PC-3 (cell line): ENCODE measurements at regions of chr5 and their contacts with region 1.

Region 1: GRCh38 chr5:51810592-51810991 is 427.3 kb downstream of the ISL1 start:
- DNase-seq: peak; percentile 88
- ATAC-seq: peak; percentile 93
- H3K4me3 ChIP-seq: no peak overlapping the region
- H3K27ac ChIP-seq: peak overlapping the region; percentile 94
- H3K4me1 ChIP-seq: peaks cover 42% of the 10 kb centered on the region
- H3K27me3 ChIP-seq: no peaks in the 10 kb centered on the region
- CTCF ChIP-seq: no peak

Region 2: DNA sequence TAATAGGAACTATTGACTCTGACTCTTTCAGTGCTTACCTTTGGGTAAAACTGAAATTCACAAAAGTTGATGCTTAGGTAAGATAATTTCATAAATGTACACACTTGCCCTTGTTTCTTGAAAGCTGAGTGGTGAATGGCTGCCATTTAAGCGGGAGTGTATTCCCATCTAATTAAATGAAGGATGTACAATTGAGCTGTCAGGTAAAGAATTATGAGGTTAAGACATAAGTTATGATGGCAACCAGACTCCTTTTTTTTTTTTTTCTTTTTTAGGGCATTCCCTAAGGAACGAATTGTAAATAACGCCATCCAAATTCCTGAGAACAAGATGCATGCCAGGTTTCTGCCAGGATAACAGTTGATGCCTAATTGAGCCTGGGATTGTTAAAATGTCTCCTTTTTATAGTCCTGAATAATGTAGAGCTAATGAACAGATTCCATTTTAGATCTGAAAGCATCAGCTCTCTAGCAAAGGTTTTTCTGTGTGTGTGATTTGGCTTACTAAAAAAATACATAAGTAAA is 227.7 kb before region 1 on chr5:
- CTCF ChIA-PET with region 1: no interaction called
- POLR2A ChIA-PET with region 1: no interaction called
- intact Hi-C with region 1: no loop called
- DNase-seq: no peak
- ATAC-seq: no peak
- H3K4me3 ChIP-seq: no peak overlapping the region
- H3K27ac ChIP-seq: no peak overlapping the region
- H3K4me1 ChIP-seq: no peaks in the 10 kb centered on the region
- H3K27me3 ChIP-seq: no peaks in the 10 kb centered on the region
- CTCF ChIP-seq: no peak

Region 3: GRCh38 chr5:51691546-51692079 is 119.0 kb before region 1 on chr5:
- CTCF ChIA-PET with region 1: no interaction called
- POLR2A ChIA-PET with region 1: no interaction called
- intact Hi-C with region 1: loop called (anchors 1 kb)
- DNase-seq: peak; percentile 68
- ATAC-seq: peak; percentile 95
- H3K4me3 ChIP-seq: no peak overlapping the region
- H3K27ac ChIP-seq: no peak overlapping the region
- H3K4me1 ChIP-seq: peaks cover 13% of the 10 kb centered on the region
- H3K27me3 ChIP-seq: no peaks in the 10 kb centered on the region
- CTCF ChIP-seq: no peak

Region 4: GRCh38 chr5:51731428-51732029 is 79.1 kb before region 1 on chr5:
- CTCF ChIA-PET with region 1: no interaction called
- POLR2A ChIA-PET with region 1: no interaction called
- intact Hi-C with region 1: loop called (anchors 10 kb)
- DNase-seq: no peak
- ATAC-seq: no peak
- H3K4me3 ChIP-seq: no peak overlapping the region
- H3K27ac ChIP-seq: no peak overlapping the region
- H3K4me1 ChIP-seq: 0 out of 2 replicates have a peak, but pooled peaks cover 4% of the 10 kb centered on the region
- H3K27me3 ChIP-seq: no peaks in the 10 kb centered on the region
- CTCF ChIP-seq: no peak

Region 5: DNA sequence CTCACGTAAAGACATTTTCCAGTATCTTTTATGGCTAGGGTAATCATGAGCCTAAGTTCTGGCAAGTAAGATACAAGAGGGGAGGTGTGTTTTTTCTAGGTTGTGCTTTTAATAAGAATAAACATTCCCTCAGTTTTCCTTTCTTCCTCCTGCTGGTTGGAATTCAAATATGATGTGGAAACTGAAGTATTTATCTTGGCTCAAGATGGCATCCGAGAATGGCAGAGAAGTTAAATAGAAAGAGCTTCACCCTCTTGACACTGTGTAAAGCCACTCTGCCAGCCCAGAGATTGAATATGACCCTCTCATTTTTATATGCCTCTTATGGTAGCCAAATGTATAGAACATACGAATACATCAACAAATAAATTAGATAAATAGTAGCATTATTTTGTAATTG is 11.1 kb after region 1 on chr5:
- CTCF ChIA-PET with region 1: no interaction called
- POLR2A ChIA-PET with region 1: no interaction called
- intact Hi-C with region 1: no loop called
- DNase-seq: no peak
- ATAC-seq: no peak
- H3K4me3 ChIP-seq: no peak overlapping the region
- H3K27ac ChIP-seq: no peak overlapping the region
- H3K4me1 ChIP-seq: no peaks in the 10 kb centered on the region
- H3K27me3 ChIP-seq: no peaks in the 10 kb centered on the region
- CTCF ChIP-seq: no peak

Region 6: GRCh38 chr5:51860532-51861018 is 50.0 kb after region 1 on chr5:
- CTCF ChIA-PET with region 1: no interaction called
- POLR2A ChIA-PET with region 1: no interaction called
- intact Hi-C with region 1: no loop called
- DNase-seq: peak; percentile 82
- ATAC-seq: peak; percentile 96
- H3K4me3 ChIP-seq: no peak overlapping the region
- H3K27ac ChIP-seq: peak overlapping the region; percentile 68
- H3K4me1 ChIP-seq: peaks cover 16% of the 10 kb centered on the region
- H3K27me3 ChIP-seq: no peaks in the 10 kb centered on the region
- CTCF ChIP-seq: no peak

Region 7: GRCh38 chr5:51902486-51902885 is 91.9 kb after region 1 on chr5:
- CTCF ChIA-PET with region 1: no interaction called
- POLR2A ChIA-PET with region 1: no interaction called
- intact Hi-C with region 1: no loop called
- DNase-seq: no peak
- ATAC-seq: no peak
- H3K4me3 ChIP-seq: no peak overlapping the region
- H3K27ac ChIP-seq: no peak overlapping the region
- H3K4me1 ChIP-seq: peaks cover 10% of the 10 kb centered on the region; the same call in 1 of the 2 replicates
- H3K27me3 ChIP-seq: no peaks in the 10 kb centered on the region
- CTCF ChIP-seq: no peak